Motor neuron (in vitro differentiated cells): ENCODE measurements at regions of chr15 and their contacts with region 1.

Region 1: DNA sequence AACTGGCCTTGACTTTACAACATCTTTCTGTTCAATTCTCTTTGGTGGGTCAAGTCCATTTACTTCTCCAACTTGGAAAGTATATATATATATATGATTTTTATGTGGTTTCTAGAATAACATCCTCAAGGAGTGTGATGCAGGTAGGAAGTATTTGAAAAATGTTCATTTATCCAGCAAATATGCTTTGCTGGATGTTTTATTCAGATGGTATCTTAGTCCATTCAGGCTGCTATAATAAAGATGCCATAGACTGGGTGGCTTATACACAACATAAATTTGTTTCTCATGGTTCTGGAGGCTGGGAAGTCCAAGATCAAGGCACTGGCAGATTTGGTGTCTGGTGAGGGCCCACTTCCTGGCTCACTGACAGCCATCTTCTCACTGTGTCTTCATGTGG is 168.7 kb upstream of the RASGRP1 start:
- ATAC-seq: no peak
- H3K4me3 ChIP-seq: no peak overlapping the region
- H3K27ac ChIP-seq: no peak overlapping the region
- H3K4me1 ChIP-seq: no peaks in the 10 kb centered on the region

Region 2: DNA sequence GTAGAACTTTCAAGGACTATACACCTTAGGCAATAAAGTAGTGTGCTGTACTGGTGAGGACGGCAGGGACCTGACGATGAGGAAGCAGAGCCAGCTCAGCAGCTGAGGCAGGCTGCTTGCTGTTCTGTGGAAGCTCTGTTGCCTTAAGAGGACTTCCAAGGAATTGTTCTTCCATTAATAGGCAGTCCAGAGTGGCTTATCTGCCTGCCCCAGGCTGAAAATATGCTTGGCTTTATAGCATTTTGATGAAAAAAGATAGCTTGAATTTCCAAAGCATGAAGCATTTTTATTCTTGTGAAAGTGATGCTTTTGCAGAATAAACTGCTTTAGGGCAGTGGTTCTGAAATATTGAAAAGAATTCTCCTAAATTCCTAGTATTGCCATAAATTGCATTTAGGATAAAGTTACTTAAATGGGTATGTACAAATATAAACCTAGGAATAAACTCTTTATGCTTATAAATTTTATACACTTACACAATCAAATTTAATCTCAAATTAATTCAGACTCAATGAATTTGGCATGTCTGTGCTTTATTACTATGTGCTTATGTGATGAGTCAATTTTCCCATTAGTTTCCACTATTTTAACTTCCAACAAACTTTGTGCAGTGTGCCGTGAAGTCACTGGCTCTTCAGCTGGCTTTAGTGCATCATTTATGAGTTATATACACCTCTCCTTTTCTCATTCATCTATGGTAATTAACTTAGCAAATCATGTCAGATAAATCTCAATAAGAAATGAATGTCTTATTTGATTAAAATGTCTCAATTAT is 62.3 kb after region 1 on chr15:
- in situ Hi-C with region 1: loop called in 1 of 9 experiments (anchors 10 kb)
- ATAC-seq: no peak
- H3K4me3 ChIP-seq: no peak overlapping the region
- H3K27ac ChIP-seq: no peak overlapping the region
- H3K4me1 ChIP-seq: no peaks in the 10 kb centered on the region

Region 3: DNA sequence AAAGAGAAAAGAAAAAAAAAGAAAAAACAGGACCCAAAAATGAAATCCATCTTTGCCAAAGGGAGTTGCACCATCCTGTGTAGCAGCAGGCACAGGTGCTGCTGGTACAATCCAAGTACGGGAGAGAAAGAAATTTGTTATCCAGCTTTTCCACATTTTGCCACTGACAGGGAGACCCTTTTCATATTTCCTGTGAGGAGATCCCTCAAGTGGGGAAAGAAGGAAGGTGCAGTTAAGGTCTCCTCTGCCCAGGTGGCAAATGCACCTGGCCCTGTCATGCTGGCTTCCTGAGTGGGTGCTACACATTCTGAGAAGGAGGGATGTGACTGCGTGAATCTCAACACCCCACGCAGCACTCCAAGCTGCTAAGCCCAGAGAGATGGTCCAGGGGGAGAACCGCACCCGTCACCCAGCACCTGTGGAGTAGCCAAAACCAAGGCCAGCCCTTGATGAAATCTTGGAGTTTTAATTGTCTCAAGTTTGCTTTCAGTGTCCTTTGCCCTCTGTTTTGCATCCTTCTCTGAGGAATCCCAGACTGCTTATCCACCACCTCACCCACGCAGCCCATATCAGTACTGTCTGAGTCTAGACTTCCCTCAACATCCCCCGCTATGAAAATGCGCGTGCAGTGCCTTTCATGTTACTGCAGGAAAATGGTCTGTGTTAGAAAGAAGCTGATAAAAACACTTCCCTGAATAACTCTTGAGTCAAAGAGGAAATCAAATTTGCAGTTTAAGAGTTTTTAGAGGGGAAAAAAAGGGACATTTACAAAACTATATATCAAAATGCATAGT is 705.7 kb after region 1 on chr15:
- in situ Hi-C with region 1: no loop called
- ATAC-seq: no peak
- H3K4me3 ChIP-seq: no peak overlapping the region
- H3K27ac ChIP-seq: no peak overlapping the region
- H3K4me1 ChIP-seq: no peaks in the 10 kb centered on the region